Thyroid gland (tissue), 4 donors: ENCODE measurements at regions of chr1 and their contacts with region 1.

Region 1: GRCh38 chr1:171644805-171645483 is 7.5 kb downstream of the MYOC start:
- DNase-seq: peak; percentile 77 to 81
- H3K4me3 ChIP-seq: no peak overlapping the region
- H3K27ac ChIP-seq: peak overlapping the region in 2 of 3 donors; percentile 1 to 36
- H3K4me1 ChIP-seq: peaks cover 3 to 9% of the 10 kb centered on the region in 2 donors
- H3K27me3 ChIP-seq: no peaks in the 10 kb centered on the region
- CTCF ChIP-seq: peak; percentile 15 to 86 (median 72)
- POLR2A ChIP-seq: no peak

Region 2: GRCh38 chr1:171715813-171716251 is 70.9 kb after region 1 on chr1:
- intact Hi-C with region 1: loop called (anchors 10 kb)
- DNase-seq: peak; percentile 81 to 83
- H3K4me3 ChIP-seq: no peak overlapping the region
- H3K27ac ChIP-seq: no peak overlapping the region
- H3K4me1 ChIP-seq: peaks cover 0 to 12% of the 10 kb centered on the region in 2 donors
- H3K27me3 ChIP-seq: no peaks in the 10 kb centered on the region
- CTCF ChIP-seq: peak; percentile 12 to 76 (median 52)
- POLR2A ChIP-seq: no peak

Region 3: DNA sequence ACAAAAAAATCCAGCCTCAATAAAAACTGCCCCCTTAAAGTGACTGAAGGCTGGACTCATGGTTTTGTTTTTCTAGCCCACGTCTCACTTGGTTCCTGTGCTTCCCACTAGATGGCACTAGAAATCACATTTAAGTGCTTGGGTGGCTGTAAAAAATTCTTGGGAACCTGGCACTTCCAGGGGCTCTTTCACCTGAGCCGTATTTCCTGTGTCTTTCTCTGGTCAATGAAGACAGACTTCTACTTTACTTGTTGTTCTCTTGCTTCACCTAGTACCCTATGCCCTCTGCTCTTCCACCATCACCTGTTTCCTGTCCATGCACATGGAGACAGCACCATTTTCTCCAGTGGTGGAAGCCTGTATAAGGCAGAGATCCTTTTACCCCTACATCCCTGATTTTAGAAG is 156.5 kb after region 1 on chr1:
- intact Hi-C with region 1: no loop called
- DNase-seq: peak in 1 of 2 donors; percentile 31
- H3K4me3 ChIP-seq: no peak overlapping the region
- H3K27ac ChIP-seq: no peak overlapping the region
- H3K4me1 ChIP-seq: peaks cover 15 to 17% of the 10 kb centered on the region in 2 donors
- H3K27me3 ChIP-seq: no peaks in the 10 kb centered on the region
- CTCF ChIP-seq: peak; percentile 53 to 89 (median 82)
- POLR2A ChIP-seq: no peak

Region 4: DNA sequence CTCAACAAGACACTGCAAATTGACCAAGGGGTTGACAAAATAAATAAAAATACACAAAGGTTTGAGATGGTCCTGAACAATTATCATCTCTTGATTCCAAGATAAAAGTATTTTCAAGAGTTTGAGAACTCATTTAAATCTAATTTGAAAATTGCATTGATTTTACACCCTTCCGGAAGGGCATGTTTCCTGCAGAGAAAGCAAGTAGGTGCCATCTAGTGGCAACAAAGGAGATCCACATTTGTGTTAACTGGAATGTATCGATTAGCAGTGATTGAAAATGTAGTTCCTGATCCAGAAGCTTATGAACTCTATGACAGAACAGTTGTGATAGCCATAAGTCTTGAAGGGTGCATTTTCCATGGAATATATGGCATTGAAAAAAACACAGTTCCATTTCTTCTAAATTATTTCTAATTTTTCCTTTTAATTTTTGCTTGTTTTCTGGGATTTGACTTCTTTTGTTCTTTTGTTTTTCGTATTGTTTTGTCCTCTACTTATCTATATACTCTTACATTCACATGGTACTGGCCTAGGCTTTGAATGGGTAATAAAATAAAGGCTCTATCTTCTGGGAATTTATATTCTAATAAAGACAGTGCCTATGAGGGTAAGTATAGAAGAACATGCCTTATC is 340.0 kb after region 1 on chr1:
- intact Hi-C with region 1: loop called (anchors 10 kb)
- DNase-seq: no peak
- H3K4me3 ChIP-seq: no peak overlapping the region
- H3K27ac ChIP-seq: no peak overlapping the region
- H3K4me1 ChIP-seq: no peaks in the 10 kb centered on the region
- H3K27me3 ChIP-seq: no peaks in the 10 kb centered on the region
- CTCF ChIP-seq: peak; percentile 43 to 86 (median 80)
- POLR2A ChIP-seq: no peak